ENCODE measurements at regions of chr3 and their contacts with region 1.

Region 1: DNA sequence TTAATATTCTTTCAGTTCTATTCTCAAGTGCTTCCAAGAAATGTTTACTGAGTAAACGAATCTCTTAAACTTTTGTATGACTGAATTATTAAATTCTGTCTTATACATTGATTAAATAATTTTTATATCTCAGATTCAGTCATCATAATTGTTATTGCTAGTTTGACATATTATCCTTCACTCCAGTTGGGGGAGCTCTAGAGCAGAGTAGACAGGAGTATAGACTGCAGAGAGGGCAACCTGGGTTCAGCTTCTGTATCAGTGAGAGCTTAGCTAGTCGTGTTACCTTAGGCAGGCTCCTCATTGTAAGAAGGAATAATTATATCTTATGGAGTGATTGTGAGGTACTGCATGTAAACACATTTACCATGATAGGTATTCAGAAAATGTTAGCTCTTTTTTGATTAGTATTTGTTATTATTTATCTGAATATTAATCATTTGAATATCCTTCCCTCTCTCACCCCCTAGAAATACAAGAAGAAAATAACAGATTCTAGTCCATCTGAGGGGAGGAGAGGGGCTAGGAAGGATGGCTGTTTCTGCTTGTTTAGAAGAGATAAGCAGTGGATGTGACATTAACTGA is 31.0 kb upstream of the ZCWPW2 start:
- DNase-seq: peak; percentile 13
- H3K4me3 ChIP-seq: no peak overlapping the region
- H3K27ac ChIP-seq: no peak overlapping the region
- H3K4me1 ChIP-seq: no peaks in the 10 kb centered on the region
- H3K27me3 ChIP-seq: no peaks in the 10 kb centered on the region
- CTCF ChIP-seq: peak; percentile 31 to 51 (median 43)
- EP300 ChIP-seq: no peak
- POLR2A ChIP-seq: no peak

Region 2: DNA sequence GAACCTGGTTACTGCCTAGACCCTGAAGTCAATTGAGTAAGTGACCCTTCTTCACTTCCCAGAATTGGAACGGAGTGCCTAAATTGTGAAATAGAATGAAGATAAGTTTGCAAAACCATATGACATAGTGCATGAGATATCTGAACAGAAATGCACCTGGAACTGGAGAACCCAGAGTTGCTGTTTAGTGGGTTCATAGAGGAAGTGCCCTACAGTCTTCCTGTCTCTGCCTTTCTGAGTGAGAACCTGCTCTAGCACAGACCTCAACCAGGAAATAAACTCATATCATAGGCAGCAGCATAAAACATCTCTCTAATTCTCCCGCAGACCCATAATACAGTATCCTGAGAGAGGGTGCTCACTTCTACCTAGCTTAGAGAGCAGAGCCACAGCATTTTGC is 678.3 kb before region 1 on chr3:
- in situ Hi-C with region 1: no loop called
- intact Hi-C with region 1: no loop called
- DNase-seq: no peak
- H3K4me3 ChIP-seq: no peak overlapping the region
- H3K27ac ChIP-seq: peak overlapping the region in 1 of 4 donors; percentile 17
- H3K4me1 ChIP-seq: no peaks in the 10 kb centered on the region
- H3K27me3 ChIP-seq: no peaks in the 10 kb centered on the region
- CTCF ChIP-seq: no peak
- EP300 ChIP-seq: no peak
- POLR2A ChIP-seq: no peak

Region 3: DNA sequence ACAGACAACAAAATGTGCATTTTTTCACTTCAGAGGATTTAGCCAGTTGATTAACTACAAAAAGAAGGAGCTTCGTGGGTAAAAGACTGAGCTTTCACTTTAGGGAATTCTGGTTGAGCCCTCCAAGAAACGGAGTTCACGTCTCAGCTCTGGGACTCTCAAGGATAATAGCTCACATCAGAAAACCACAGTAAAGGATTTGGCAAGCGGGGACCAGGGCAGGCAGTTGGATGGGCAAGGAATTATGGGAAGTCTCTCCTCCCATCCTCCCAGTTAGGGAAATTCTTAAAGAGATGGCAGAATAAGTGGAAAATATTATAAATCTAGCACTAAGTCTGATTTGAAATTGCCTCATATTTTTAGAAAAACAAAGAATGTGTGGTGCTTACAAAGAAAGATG is 407.1 kb before region 1 on chr3:
- in situ Hi-C with region 1: no loop called
- intact Hi-C with region 1: no loop called
- DNase-seq: no peak
- H3K4me3 ChIP-seq: no peak overlapping the region
- H3K27ac ChIP-seq: no peak overlapping the region
- H3K4me1 ChIP-seq: no peaks in the 10 kb centered on the region
- H3K27me3 ChIP-seq: no peaks in the 10 kb centered on the region
- CTCF ChIP-seq: no peak
- EP300 ChIP-seq: no peak
- POLR2A ChIP-seq: no peak

Region 4: GRCh38 chr3:28334552-28334951 is 17.0 kb after region 1 on chr3:
- in situ Hi-C with region 1: no loop called
- intact Hi-C with region 1: loop called (anchors 1 kb)
- DNase-seq: no peak
- H3K4me3 ChIP-seq: no peak overlapping the region
- H3K27ac ChIP-seq: no peak overlapping the region
- H3K4me1 ChIP-seq: no peaks in the 10 kb centered on the region
- H3K27me3 ChIP-seq: no peaks in the 10 kb centered on the region
- CTCF ChIP-seq: peak in 1 of 5 experiments; percentile 7
- EP300 ChIP-seq: no peak
- POLR2A ChIP-seq: no peak

Measured in transverse colon (tissue), 4 donors.